ENCODE measurements at regions of chr1 and their contacts with region 1.

Region 1: DNA sequence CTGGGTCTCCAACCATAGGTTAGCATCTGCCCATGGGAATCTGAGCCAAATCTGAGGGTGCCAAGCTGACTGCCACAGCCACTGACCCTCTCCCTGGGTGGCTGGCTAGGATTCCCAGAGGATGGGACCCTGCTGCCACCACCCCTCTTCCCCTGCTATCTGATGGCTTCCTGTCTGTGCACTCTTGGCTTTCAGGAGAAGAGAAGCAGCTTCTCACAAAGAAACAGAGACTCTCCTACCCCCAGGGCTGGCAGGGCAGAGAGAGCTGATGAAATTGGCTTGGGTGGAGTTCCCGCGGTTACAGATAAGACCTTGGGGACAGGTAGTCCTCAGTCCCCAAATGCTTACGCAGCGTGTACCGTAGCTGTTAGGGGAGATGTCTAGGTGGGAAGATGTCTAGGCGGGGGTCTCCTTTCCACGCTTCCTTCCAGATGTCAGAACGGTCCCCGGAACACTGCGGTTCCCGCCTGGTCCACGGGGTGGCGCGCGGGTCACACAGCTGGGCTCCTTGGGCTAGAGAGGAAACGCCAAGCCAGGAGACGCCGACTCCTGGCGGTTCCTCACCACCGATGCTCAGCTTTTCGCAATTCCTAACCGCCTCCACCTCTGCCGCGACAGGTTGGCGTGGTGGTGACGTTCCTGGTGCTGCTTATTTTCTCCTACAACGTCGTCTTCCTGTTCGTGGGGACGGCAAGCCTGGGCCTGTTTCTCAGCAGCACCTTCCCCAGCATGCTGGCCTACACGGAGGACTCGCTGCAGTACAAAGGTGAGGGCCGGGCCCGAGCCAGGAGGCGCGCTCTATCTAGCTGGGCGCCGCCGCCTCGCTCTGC is 40.1 kb downstream of the ELK4 start:
- DNase-seq: peak; percentile 91
- ATAC-seq: peak; percentile 95
- H3K4me3 Mint-ChIP-seq: peak overlapping the region; percentile 82
- H3K27ac Mint-ChIP-seq: peak overlapping the region; percentile 85
- H3K4me1 Mint-ChIP-seq: peaks cover 26% of the 10 kb centered on the region
- H3K27me3 Mint-ChIP-seq: no peaks in the 10 kb centered on the region

Region 2: DNA sequence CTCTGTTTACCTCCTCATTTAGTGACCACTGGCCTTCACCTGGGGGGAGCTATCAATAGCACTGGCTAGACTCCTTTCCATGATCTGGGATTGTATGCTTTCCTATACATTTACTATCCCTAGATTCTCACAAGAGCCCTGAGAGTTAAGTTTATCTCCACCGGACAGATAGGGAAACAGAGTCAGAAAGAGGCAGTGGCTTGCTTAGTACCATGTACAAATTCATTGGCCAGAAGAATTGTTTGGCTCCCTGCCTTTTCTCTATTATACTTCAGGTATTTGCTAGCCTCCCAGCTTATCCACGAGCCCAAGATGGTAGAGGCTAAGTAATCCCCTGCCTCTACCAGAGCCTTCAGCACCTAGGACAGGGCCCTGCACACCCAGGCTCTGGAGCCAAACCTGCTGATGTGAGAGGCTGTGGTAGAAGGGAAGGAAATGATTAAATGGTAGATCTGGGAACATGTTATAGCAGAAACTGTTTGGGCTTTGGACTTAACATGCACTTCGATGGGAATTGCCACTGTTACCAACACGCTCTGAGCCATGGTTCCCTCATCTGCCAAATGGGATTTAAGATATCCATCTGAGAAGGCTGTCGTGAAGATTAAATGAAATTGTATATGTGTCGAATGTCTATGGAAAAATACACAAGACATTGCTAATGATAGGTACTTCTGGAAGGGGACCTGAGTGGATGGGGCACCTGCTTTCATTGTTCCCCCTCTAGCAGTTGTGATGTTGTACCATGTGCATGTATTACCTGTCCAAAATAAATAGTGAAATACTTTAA is 132.8 kb before region 1 on chr1:
- CTCF ChIA-PET with region 1: no interaction called
- DNase-seq: peak; percentile 64
- ATAC-seq: peak; percentile 58
- H3K4me3 Mint-ChIP-seq: no peak overlapping the region
- H3K27ac Mint-ChIP-seq: no peak overlapping the region
- H3K4me1 Mint-ChIP-seq: peaks cover 13% of the 10 kb centered on the region
- H3K27me3 Mint-ChIP-seq: peaks cover 60% of the 10 kb centered on the region

Region 3: GRCh38 chr1:205610036-205610435 is 18.3 kb after region 1 on chr1:
- CTCF ChIA-PET with region 1: interaction called, 14 read pairs
- DNase-seq: no peak
- ATAC-seq: no peak
- H3K4me3 Mint-ChIP-seq: no peak overlapping the region
- H3K27ac Mint-ChIP-seq: no peak overlapping the region
- H3K4me1 Mint-ChIP-seq: peaks cover 37% of the 10 kb centered on the region
- H3K27me3 Mint-ChIP-seq: no peaks in the 10 kb centered on the region

Region 4: DNA sequence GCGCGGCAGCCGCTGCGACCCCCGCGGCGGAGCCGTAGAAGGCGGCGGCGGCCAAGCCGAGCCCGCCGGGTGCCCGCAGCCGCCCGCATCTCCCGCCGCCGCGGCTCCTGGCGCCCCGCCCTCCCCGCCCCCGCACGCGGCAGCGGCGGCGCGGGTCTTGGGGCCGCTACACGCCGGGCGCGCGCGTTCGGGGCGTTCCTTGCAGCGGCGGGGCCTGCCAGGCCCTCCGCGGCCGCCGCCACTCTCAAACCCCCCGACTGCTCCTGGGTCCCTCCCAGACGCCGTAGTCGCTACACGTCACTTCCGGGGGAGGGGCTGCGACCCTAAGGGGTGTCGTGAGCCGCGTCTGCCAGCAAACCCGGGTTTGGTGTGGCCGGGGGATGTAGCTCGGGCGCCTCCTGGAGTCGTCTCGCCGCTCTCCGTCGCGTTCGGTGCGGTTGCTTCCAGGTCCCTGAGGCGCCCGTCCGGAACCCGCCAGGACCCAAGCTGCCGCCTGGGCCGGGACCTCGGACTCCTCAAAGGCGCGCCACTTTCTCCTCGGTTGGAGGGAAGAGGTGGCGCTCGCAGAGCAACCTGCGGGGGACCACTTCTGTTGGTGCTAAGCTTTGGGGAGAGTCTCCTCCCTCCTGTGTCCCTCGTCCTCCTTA is 40.1 kb after region 1 on chr1 and contains the start of gene ELK4:
- CTCF ChIA-PET with region 1: interaction called, 199 read pairs
- DNase-seq: peak; percentile 99
- ATAC-seq: peak; percentile 86
- H3K4me3 Mint-ChIP-seq: peak within 1 kb of the TSS; percentile 91
- H3K27ac Mint-ChIP-seq: peak within 1 kb of the TSS; percentile 100
- H3K4me1 Mint-ChIP-seq: peaks cover 42% of the 10 kb centered on the region
- H3K27me3 Mint-ChIP-seq: peaks cover 6% of the 10 kb centered on the region
- total RNA-seq, gene ELK4: 70.9 to 79.7 TPM

Region 5: DNA sequence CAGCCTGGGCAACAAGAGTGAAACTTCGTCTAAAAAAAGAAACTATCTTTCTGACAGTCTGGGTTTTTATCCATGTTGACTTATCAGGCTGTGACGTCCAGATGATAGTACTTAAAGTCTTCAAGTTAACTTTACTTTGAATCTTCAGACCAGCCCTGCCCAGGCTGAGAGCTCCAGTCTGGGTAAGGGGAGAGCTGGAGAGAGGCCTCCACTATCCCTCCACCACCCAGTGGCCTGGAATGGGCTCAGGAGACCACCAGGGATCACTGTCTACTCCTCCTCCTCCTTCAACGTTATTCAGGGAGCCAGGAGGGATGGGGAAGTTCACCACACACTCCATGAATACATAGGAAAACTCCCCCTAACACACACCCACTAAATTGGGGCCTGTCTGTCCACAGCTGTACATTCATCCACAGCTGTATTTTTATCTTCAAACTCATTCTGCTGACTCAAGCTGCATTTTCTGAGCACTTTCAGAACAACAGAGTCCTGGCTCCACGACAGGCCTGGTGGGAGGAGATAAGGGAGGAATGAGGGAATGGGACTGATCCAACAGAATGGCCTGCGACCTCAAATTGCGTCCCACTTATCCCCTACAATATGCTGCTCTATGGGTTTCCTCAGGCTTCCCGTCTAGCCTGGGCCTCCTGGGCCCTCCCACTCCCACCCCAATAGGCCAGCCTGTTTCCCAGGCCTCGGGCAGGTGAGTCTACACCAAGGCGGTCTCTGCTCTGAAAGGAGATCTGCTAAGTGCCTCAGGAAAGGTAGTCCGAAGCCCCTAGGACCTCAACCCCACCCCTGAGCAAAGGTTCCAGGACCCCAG is 86.8 kb after region 1 on chr1:
- CTCF ChIA-PET with region 1: interaction called, 12 read pairs
- DNase-seq: no peak
- ATAC-seq: no peak
- H3K4me3 Mint-ChIP-seq: no peak overlapping the region
- H3K27ac Mint-ChIP-seq: no peak overlapping the region
- H3K4me1 Mint-ChIP-seq: peaks cover 12% of the 10 kb centered on the region
- H3K27me3 Mint-ChIP-seq: peaks cover 30% of the 10 kb centered on the region